K562 (cell line): ENCODE measurements at regions of chrX and their contacts with region 1.

Region 1: DNA sequence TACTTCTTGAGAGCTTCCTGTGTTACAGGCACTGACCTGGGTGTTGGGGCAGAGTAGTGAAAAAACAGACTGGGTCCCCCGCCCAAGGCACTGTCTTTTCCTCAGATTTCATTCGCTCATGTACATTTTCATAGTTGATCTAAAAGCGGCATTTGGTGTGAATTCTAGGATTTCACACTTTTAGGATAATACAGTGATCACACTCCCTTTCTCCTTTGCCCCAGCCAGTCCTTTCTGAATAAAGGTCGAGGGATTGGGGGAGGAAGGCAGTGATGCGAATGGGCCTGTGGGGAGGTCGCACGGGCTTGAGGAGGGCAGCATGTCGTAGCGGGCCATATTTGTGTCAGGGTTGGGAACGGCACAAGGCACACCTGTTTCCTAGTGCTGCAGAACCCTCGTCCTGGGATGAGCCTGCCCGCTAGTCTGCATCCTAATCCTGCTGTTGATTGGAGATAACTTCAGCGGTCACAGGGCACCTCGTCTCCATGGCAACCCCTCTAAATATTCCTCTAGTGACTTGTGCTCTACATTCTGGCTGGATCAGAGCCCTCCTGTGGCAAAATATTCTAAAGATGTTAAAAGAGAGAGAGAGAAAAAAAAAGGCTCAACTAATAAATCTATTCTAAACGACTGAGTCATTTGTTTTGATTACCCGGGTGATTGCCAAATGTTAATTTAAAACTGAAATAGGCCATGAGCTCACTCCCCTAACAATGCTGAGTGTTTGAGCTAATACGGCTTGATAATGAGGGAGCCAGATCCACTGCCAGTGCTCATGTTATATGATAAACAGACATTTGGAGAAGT is 21.8 kb downstream of the FHL1 start:
- DNase-seq: peak in 3 of 4 experiments; percentile 28 to 62 (median 57)
- ATAC-seq: no peak; the same call in 2 of the 3 replicates
- H3K4me3 ChIP-seq: no peak overlapping the region
- H3K27ac ChIP-seq: no peak overlapping the region
- H3K4me1 ChIP-seq: no peaks in the 10 kb centered on the region
- H3K27me3 ChIP-seq: peaks cover 22 to 36% of the 10 kb centered on the region in 2 experiments
- CTCF ChIP-seq: no peak
- EP300 ChIP-seq: no peak
- POLR2A ChIP-seq: no peak
- RAD21 ChIP-seq: no peak

Region 2: DNA sequence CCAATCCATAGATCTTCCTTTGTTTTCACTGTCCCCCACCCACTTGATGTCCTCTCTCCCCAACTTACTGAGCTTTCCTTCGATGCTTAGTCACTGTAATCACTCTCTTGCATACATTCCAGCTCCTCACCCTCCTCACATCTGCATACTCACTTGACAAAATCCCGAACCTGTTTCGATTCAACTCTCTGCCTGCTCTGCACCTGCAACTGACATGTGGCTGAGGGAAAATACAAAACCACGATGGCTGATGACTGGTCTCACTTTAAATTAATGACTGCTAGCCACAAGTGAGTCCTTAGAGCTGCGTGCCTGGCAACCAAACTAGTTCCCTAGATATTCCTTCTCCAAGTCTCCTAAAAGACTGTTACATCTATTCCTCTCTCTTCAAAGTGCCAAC is 92.2 kb before region 1 on chrX:
- CTCF ChIA-PET with region 1: no interaction called
- POLR2A ChIA-PET with region 1: no interaction called
- in situ Hi-C with region 1: no loop called
- intact Hi-C with region 1: no loop called
- DNase-seq: no peak
- ATAC-seq: no peak
- H3K4me3 ChIP-seq: no peak overlapping the region
- H3K27ac ChIP-seq: no peak overlapping the region
- H3K4me1 ChIP-seq: no peaks in the 10 kb centered on the region
- H3K27me3 ChIP-seq: peaks cover 4 to 23% of the 10 kb centered on the region in 2 experiments; a peak in 3 of 5 replicates
- CTCF ChIP-seq: no peak
- EP300 ChIP-seq: no peak
- POLR2A ChIP-seq: no peak
- RAD21 ChIP-seq: no peak

Region 3: DNA sequence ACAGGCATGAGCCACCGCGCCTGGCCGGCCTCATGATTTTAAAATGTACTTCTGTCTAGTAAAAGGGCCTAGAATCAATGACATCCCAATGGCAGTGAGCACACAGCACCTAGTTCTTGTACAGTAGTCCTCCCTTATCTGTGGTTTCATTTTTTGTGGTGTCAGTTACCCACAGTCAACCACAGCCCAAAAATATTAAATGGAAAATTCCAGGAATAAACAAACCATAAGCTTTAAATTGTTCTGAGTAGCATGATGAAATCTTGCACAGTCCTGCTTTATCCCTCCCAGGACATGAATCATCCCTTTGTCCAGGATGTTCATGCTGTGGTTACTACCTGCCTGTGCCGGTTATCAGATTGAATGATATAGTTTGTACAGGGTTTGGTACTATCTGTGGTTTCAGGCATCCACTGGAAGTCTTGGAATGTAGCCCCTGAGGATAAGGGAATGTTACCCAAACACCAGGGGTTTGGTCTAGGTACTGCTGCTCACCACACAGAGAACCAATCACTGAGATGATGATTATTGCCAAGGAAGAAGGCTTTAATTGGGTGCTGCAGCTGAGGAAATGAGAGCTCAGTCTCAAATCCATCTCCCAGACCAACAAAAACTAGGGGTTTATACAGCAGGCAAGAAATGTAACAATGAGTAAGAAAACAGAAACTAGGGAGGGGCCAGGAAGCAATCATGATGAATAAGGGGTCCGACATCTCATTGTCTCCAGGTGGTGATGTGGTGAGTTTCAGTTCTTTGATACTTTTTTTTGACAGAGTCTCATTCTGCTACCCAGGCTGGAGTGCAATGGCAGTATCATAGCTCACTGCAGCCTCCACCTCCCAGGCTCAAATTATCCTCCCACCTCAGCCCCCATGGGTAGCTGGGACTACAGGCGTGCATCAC is 38.0 kb before region 1 on chrX:
- CTCF ChIA-PET with region 1: no interaction called
- POLR2A ChIA-PET with region 1: no interaction called
- in situ Hi-C with region 1: no loop called
- intact Hi-C with region 1: no loop called
- DNase-seq: peak in 1 of 4 experiments; percentile 11
- ATAC-seq: peak; percentile 86
- H3K4me3 ChIP-seq: no peak overlapping the region
- H3K27ac ChIP-seq: no peak overlapping the region
- H3K4me1 ChIP-seq: no peaks in the 10 kb centered on the region; a peak in 2 of 5 replicates
- H3K27me3 ChIP-seq: no peaks in the 10 kb centered on the region
- CTCF ChIP-seq: no peak
- EP300 ChIP-seq: peak; percentile 75
- POLR2A ChIP-seq: no peak
- RAD21 ChIP-seq: no peak; a peak in 1 of 4 replicates

Region 4: GRCh38 chrX:136209016-136209738 is 40.0 kb after region 1 on chrX:
- CTCF ChIA-PET with region 1: no interaction called
- POLR2A ChIA-PET with region 1: no interaction called
- in situ Hi-C with region 1: no loop called
- intact Hi-C with region 1: loop called (anchors 2 kb)
- DNase-seq: peak; percentile 42 to 51 (median 50)
- ATAC-seq: peak; percentile 93
- H3K4me3 ChIP-seq: no peak overlapping the region
- H3K27ac ChIP-seq: no peak overlapping the region
- H3K4me1 ChIP-seq: peaks cover 0 to 3% of the 10 kb centered on the region in 2 experiments; a peak in 2 of 5 replicates
- H3K27me3 ChIP-seq: peaks cover 2 to 23% of the 10 kb centered on the region in 2 experiments; a peak in 4 of 5 replicates
- CTCF ChIP-seq: peak; percentile 60 to 65 (median 64)
- EP300 ChIP-seq: no peak
- POLR2A ChIP-seq: no peak
- RAD21 ChIP-seq: peak; percentile 54 to 68